ENCODE measurements at regions of chr2 and their contacts with region 1.

Region 1: GRCh38 chr2:223549215-223549614 is 52.9 kb downstream of the SCG2 start:
- DNase-seq: peak; percentile 96 to 100
- H3K4me3 ChIP-seq: peak overlapping the region; percentile 8; the same call in 1 of the 2 replicates
- H3K27ac ChIP-seq: peak overlapping the region; percentile 89
- H3K4me1 ChIP-seq: peaks cover 54% of the 10 kb centered on the region
- H3K27me3 ChIP-seq: no peaks in the 10 kb centered on the region
- CTCF ChIP-seq: no peak

Region 2: DNA sequence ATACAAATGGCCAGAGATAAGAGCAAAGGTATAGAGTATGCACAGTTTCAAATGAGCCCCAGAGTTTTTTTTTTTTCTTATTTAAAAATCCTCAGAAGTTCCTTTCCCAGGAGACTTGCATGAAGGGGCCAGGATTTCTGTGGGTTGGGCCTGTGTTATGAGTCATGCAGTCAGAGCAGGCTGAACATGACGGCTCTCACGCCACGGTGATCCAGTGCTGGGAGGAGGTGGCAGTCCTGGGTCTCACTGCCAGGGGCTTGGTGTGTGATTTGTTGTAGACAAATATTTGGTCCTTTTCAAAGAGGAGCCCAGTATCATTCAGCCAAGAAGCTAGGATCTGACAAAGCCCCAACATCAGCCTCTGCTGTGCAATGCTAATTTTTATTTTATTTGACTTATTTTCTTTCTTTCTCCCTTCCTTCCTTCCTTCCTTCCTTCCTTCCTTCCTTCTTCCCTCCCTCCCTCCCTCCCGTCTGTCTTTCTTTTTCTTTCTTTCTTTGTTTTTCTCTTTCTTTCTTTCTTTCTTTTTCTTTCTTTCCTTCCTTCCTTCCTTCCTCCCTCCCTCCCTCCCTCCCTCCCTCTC is 507.6 kb before region 1 on chr2:
- CTCF ChIA-PET with region 1: no interaction called
- POLR2A ChIA-PET with region 1: interaction called, 4 read pairs
- intact Hi-C with region 1: loop called (anchors 5 kb)
- DNase-seq: peak; percentile 90 to 92
- H3K4me3 ChIP-seq: peak overlapping the region; percentile 2; the same call in 1 of the 2 replicates
- H3K27ac ChIP-seq: peak overlapping the region; percentile 88
- H3K4me1 ChIP-seq: peaks cover 40% of the 10 kb centered on the region
- H3K27me3 ChIP-seq: no peaks in the 10 kb centered on the region
- CTCF ChIP-seq: no peak

Region 3: DNA sequence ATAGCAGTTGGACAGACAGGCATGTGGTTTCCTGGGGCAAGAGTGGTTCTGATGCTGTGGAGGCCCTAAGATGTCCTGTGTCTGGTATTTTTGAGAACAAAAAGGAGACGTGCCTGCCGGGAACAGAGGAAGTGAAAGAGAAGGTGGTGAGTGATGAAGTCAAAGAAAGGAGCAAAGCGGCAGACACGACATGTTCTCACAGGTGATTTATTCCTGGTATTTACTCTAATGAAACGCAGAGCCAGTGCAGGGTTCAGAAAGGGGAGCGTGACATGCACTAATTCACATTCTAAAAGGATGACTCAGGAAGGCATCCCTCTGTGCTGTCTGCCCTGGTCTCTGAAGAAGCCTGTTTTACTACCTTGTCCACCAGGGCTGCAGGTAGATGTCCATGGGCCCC is 286.3 kb before region 1 on chr2:
- CTCF ChIA-PET with region 1: no interaction called
- POLR2A ChIA-PET with region 1: no interaction called
- intact Hi-C with region 1: loop called (anchors 1 kb)
- DNase-seq: peak; percentile 63 to 73
- H3K4me3 ChIP-seq: no peak overlapping the region
- H3K27ac ChIP-seq: no peak overlapping the region
- H3K4me1 ChIP-seq: peaks cover 11% of the 10 kb centered on the region
- H3K27me3 ChIP-seq: no peaks in the 10 kb centered on the region
- CTCF ChIP-seq: no peak

Region 4: DNA sequence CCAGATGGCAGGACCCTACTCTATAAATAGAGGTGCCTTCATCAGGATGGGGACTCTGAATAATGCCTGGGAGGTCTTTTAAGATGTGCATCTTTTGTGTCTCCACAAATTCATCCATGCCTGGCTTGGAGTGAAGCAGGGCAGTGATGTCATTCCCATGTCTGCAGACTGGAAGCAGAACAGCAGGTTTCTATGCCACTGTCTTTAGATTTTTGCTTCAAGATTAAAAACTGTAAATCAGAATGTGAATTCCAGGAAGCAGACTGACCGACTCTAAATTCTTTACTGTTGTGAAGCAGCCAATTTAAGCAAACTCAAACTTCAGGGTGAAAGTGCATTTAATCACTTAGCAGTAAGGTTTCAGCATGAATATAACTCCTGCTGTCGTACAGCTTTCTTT is 106.4 kb before region 1 on chr2:
- CTCF ChIA-PET with region 1: no interaction called
- POLR2A ChIA-PET with region 1: no interaction called
- intact Hi-C with region 1: no loop called
- DNase-seq: no peak
- H3K4me3 ChIP-seq: no peak overlapping the region
- H3K27ac ChIP-seq: no peak overlapping the region
- H3K4me1 ChIP-seq: no peaks in the 10 kb centered on the region
- H3K27me3 ChIP-seq: no peaks in the 10 kb centered on the region
- CTCF ChIP-seq: no peak

Region 5: GRCh38 chr2:223494987-223495386 is 54.2 kb before region 1 on chr2:
- CTCF ChIA-PET with region 1: no interaction called
- POLR2A ChIA-PET with region 1: no interaction called
- intact Hi-C with region 1: no loop called
- DNase-seq: no peak
- H3K4me3 ChIP-seq: no peak overlapping the region
- H3K27ac ChIP-seq: no peak overlapping the region
- H3K4me1 ChIP-seq: no peaks in the 10 kb centered on the region
- H3K27me3 ChIP-seq: no peaks in the 10 kb centered on the region
- CTCF ChIP-seq: no peak

Region 6: GRCh38 chr2:223526106-223526505 is 23.1 kb before region 1 on chr2:
- CTCF ChIA-PET with region 1: no interaction called
- POLR2A ChIA-PET with region 1: interaction called, 21 read pairs
- intact Hi-C with region 1: no loop called
- DNase-seq: peak; percentile 22 to 65
- H3K4me3 ChIP-seq: no peak overlapping the region
- H3K27ac ChIP-seq: no peak overlapping the region
- H3K4me1 ChIP-seq: peaks cover 9% of the 10 kb centered on the region; the same call in 1 of the 2 replicates
- H3K27me3 ChIP-seq: no peaks in the 10 kb centered on the region
- CTCF ChIP-seq: no peak; the same call in 1 of the 2 replicates

Region 7: DNA sequence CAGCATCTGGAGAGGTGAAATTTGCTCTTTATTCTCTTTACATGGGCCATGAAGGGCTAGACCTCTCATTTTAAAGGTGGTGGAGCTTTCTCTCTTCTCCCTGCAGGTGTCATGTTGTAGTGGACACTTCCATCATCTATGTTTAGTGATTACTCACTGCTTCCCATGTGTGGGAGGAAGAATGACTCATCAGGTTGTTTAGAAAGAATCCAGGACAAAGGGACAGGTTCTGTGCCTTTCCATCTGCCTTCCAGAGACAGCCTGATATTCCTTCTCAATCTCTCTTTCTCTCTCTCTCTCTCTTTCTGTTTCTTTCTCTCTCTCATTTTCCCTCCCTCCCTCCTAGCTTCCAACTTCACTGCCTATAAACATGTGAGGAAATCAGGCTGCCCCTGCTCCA is 14.2 kb after region 1 on chr2:
- CTCF ChIA-PET with region 1: no interaction called
- POLR2A ChIA-PET with region 1: no interaction called
- intact Hi-C with region 1: loop called (anchors 1 kb)
- DNase-seq: peak; percentile 60 to 99
- H3K4me3 ChIP-seq: peak overlapping the region; percentile 34
- H3K27ac ChIP-seq: peak overlapping the region; percentile 92
- H3K4me1 ChIP-seq: peaks cover 42% of the 10 kb centered on the region
- H3K27me3 ChIP-seq: no peaks in the 10 kb centered on the region
- CTCF ChIP-seq: peak; percentile 37; the same call in 1 of the 2 replicates

Region 8: GRCh38 chr2:223727562-223727961 is 178.3 kb after region 1 on chr2:
- CTCF ChIA-PET with region 1: no interaction called
- POLR2A ChIA-PET with region 1: no interaction called
- intact Hi-C with region 1: loop called (anchors 1 kb)
- DNase-seq: peak; percentile 39 to 73
- H3K4me3 ChIP-seq: no peak overlapping the region
- H3K27ac ChIP-seq: no peak overlapping the region
- H3K4me1 ChIP-seq: peaks cover 19% of the 10 kb centered on the region
- H3K27me3 ChIP-seq: no peaks in the 10 kb centered on the region
- CTCF ChIP-seq: peak; percentile 73